Head of caudate nucleus (tissue), 42 donors: ENCODE measurements at regions of chr10 and their contacts with region 1.

Region 1: DNA sequence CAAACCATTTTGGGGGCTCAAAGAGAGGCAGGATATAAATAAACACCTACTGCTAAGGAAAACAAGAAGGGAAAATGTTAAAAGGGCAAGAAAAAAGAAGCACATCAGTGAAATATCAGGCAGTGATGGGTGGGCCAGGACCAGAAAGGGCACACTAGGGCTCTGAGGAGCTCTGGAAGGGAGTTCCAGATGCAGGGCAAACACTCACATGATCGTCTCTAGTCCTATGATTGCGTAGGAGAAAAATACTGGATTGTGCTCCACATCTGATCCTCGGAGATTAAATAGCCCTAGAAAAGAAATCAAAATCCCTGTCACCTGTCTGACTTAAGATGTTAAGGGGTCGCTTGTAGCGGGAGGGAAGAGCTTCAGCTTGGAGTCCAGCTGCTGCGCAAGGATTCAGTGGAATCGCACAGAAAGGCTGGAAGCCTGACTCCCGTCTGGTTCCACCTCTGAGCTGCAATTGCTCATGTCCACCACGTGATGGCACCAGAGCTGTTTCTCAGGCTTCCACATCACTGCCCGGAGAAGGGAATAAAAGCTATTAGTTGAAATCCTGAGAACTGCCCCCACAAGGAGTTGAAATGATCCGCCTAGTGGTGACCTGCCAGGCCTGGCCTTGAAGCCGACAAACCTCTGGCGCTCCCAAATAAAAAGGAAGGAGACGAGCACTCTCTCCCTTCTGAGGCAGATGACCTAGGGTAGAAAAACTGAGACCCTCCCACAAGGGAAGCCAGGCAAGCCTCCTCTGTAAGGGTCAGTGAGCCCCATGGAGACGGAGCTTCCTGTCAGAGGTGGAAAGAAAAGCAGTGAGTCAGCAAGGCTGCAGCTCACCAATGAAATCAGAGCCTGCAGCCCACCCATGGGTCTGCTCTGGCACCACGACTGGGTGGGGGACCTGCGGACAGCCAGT is 39.2 kb downstream of the XPNPEP1 start:
- DNase-seq: peak; percentile 59 to 93 (median 80)

Region 2: DNA sequence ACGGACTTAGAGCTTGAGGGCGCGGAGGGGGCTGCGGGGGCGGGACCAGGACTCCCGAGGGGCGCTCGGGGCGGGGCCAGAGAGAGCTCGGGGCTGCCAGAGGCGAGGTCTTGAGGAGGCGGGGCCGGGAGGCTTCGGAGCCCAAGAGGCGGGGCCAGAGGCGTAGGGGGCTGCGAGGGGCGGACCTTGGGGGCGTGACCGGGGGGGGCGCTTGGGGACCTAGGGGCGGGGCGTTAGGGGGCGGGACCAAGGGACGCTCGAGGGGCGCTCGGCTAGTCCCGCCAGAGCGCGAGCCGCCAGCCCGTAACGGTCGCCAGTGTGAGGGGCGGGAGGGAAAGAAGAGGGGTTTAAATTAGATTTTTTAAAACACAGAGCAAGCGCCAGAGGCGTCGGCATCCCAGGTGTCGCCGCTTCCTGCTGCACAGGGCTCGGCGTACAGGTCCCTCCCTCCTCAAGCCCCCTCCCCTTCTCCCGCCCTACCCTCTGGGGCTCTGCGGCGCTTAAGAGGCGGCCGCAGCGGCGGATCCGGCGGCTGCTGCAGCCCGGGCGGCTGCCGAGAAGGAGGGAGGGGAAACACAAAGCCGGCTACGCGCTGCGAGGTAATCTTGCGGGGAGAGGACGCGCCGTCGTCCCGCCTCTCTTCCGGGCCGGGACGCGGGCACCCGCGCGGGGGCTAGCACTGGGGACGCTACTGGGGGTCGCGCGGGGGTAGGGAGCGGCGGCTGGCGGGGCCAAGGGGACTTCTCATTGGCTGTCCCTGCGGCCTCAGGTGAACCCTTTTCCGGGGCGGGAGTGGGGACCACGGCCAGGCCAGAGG is 123.8 kb after region 1 on chr10 and contains the start of gene ADD3:
- intact Hi-C with region 1: loop called (anchors 10 kb)
- DNase-seq: peak; percentile 90 to 99 (median 97)

Region 3: DNA sequence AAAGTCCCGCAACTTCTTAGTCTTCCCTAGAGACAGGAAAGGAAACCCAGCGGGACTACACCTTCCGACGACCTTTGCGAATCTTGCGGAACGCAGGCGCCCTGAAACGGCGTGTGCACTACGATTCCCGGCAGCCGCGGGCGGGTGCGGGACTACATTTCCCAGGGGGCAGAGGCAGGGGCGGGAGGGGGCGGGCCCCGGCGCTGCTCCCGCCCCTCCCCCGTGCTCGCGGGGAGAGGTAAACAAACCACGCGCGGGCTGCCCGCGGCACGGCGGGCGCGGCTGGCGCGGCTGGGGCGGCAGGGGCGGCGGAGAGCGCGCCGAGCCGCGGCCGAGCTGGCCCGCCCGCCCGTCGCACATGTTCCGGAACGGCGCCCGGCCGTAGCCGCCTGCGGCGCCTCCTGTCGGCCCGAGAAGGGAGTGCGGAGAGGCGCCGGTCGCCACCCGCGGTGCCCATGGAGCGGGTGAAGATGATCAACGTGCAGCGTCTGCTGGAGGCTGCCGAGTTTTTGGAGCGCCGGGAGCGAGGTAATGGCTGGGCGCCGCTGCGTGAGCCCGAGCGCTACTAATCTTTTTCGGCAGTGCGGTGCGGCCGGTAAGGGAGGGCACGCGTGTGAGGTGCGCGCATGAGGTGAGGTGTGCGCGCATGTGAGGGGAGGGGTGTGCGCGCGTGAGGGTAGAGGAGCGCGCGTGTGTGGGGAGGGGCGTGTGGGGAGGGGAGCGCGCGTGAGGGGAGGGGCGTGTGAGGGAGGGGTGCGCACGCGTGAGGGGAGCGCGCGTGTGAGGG is 341.8 kb after region 1 on chr10:
- intact Hi-C with region 1: loop called (anchors 10 kb)
- DNase-seq: peak; percentile 83 to 97 (median 93)

Region 4: GRCh38 chr10:110279407-110279986 is 395.4 kb after region 1 on chr10:
- intact Hi-C with region 1: loop called (anchors 10 kb)
- DNase-seq: peak in 39 of 42 donors; percentile 12 to 86 (median 71)

Region 5: DNA sequence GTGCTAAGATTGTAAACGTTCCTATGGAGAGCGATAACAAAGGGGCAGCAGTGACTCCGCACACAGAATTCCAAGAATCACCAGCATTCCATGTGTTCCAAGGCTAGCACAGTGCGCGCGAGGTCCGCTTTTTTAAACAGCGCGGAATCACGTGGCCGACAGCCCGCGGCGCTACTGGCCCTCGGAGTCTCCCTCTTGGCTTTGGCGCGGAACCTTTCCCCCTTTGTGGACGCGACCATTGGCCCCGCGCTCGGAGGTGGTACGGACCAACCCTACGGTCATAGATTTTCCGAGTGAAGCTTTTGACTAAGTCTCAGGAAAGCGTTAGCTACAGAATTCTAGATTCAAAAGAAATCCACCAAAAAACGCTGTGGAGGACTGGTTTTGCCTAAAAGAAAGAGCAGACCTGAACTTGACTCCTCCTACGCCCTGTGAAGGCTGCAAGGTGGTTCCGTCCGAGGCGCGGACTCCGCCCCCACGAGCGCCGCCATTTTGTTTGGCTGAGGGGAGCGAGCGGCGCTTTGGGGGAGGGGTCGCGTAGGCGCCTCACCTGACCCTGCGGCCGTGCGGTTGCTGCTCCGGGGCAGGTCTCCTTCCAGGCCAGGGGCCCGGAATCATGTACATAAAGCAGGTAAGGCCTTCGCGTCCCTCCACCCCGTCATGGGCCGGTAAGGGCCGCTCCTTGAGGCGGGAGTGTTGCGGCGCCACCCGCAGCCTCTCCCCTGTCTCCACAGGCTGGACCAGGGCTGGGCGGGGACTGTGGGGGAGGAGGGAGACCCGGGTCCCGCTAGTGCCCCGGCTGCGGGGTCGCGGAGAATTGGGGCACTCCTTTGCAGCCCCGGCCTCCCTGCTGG is 683.3 kb after region 1 on chr10 and contains the start of gene SMC3:
- intact Hi-C with region 1: loop called (anchors 10 kb)
- DNase-seq: peak; percentile 88 to 97 (median 94)